Right lobe of liver (tissue), 6 donors: ENCODE measurements at regions of chr9 and their contacts with region 1.

Region 1: GRCh38 chr9:130893341-130894101 is 3.1 kb downstream of the QRFP start:
- DNase-seq: peak in 2 of 3 donors; percentile 55 to 73
- ATAC-seq: peak; percentile 57 to 80 (median 70)
- H3K4me3 ChIP-seq: no peak overlapping the region
- H3K27ac ChIP-seq: no peak overlapping the region
- H3K4me1 ChIP-seq: no peaks in the 10 kb centered on the region
- H3K27me3 ChIP-seq: no peaks in the 10 kb centered on the region
- CTCF ChIP-seq: peak in 3 of 4 donors; percentile 19 to 40 (median 27)
- POLR2A ChIP-seq: no peak

Region 2: GRCh38 chr9:130138171-130138653 is 755.3 kb before region 1 on chr9:
- intact Hi-C with region 1: no loop called
- DNase-seq: no peak
- ATAC-seq: peak in 2 of 4 donors; percentile 21 to 49
- H3K4me3 ChIP-seq: no peak overlapping the region
- H3K27ac ChIP-seq: no peak overlapping the region
- H3K4me1 ChIP-seq: no peaks in the 10 kb centered on the region
- H3K27me3 ChIP-seq: no peaks in the 10 kb centered on the region
- CTCF ChIP-seq: no peak
- POLR2A ChIP-seq: no peak

Region 3: GRCh38 chr9:131046581-131047202 is 153.2 kb after region 1 on chr9:
- intact Hi-C with region 1: loop called in 1 of 2 experiments (anchors 10 kb)
- DNase-seq: peak in 1 of 3 donors; percentile 62
- ATAC-seq: peak; percentile 85 to 96 (median 91)
- H3K4me3 ChIP-seq: no peak overlapping the region
- H3K27ac ChIP-seq: no peak overlapping the region
- H3K4me1 ChIP-seq: no peaks in the 10 kb centered on the region
- H3K27me3 ChIP-seq: no peaks in the 10 kb centered on the region
- CTCF ChIP-seq: peak; percentile 66 to 96 (median 94)
- POLR2A ChIP-seq: no peak